ENCODE measurements at regions of chr5 and their contacts with region 1.

Region 1: DNA sequence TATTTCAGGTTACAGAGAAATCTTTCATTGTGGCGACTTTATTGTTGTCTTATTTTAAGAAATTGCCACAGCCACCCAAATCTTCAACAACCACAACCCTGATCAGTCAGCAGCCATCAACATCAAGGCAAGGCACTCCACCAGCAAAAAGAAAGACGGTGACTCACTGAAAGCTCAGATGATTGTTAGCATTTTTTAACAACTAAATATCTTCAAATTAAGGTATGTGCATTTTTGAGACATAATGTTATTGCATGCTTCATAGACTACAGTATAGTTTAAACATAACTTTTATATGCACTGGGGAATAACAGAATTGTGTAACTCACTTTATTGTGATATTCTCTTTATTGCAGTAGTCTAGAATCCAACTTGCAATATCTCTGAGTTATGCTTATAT is 263.4 kb downstream of the TMEM232 start:
- DNase-seq: no peak
- ATAC-seq: no peak
- H3K4me3 ChIP-seq: no peak overlapping the region
- H3K27ac ChIP-seq: no peak overlapping the region
- H3K4me1 ChIP-seq: no peaks in the 10 kb centered on the region
- H3K27me3 ChIP-seq: no peaks in the 10 kb centered on the region
- CTCF ChIP-seq: no peak

Region 2: GRCh38 chr5:110209401-110209800 is 253.7 kb before region 1 on chr5:
- intact Hi-C with region 1: no loop called
- DNase-seq: no peak
- ATAC-seq: no peak
- H3K4me3 ChIP-seq: no peak overlapping the region
- H3K27ac ChIP-seq: no peak overlapping the region
- H3K4me1 ChIP-seq: no peaks in the 10 kb centered on the region
- H3K27me3 ChIP-seq: no peaks in the 10 kb centered on the region
- CTCF ChIP-seq: no peak

Region 3: DNA sequence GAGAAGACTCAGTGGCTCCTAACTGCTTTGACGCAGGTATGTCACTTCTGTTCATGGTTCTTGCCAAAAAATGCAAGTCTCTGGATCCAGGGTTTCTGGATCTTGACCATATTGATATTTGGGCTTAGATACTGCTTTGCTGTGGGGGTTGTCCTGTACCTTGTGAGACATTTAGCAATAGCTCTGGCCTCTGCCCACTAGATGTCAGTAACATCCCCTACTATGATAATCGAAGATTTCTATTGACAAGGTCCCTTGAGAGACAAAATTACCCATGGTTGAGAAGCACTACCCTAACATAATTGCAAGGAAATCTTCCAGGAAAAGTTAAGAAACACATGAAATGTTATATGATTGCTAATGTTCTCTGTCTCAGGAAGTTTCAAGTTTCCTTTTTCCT is 22.1 kb before region 1 on chr5:
- intact Hi-C with region 1: no loop called
- DNase-seq: no peak
- ATAC-seq: peak in 3 of 4 donors; percentile 54 to 86 (median 57)
- H3K4me3 ChIP-seq: no peak overlapping the region
- H3K27ac ChIP-seq: no peak overlapping the region
- H3K4me1 ChIP-seq: peaks cover 11% of the 10 kb centered on the region
- H3K27me3 ChIP-seq: no peaks in the 10 kb centered on the region
- CTCF ChIP-seq: peak; percentile 38

Region 4: GRCh38 chr5:110507972-110508371 is 44.9 kb after region 1 on chr5:
- intact Hi-C with region 1: loop called in 1 of 2 experiments (anchors 1 kb)
- DNase-seq: no peak
- ATAC-seq: no peak
- H3K4me3 ChIP-seq: no peak overlapping the region
- H3K27ac ChIP-seq: no peak overlapping the region
- H3K4me1 ChIP-seq: no peaks in the 10 kb centered on the region
- H3K27me3 ChIP-seq: no peaks in the 10 kb centered on the region
- CTCF ChIP-seq: no peak

Measured in psoas muscle (tissue), 8 donors.